Activated CD4-positive, alpha-beta memory T cell treated with anti-CD3 and anti-CD28 coated beads for 36 hours (primary cell): ENCODE measurements at regions of chr2 and their contacts with region 1.

Region 1: DNA sequence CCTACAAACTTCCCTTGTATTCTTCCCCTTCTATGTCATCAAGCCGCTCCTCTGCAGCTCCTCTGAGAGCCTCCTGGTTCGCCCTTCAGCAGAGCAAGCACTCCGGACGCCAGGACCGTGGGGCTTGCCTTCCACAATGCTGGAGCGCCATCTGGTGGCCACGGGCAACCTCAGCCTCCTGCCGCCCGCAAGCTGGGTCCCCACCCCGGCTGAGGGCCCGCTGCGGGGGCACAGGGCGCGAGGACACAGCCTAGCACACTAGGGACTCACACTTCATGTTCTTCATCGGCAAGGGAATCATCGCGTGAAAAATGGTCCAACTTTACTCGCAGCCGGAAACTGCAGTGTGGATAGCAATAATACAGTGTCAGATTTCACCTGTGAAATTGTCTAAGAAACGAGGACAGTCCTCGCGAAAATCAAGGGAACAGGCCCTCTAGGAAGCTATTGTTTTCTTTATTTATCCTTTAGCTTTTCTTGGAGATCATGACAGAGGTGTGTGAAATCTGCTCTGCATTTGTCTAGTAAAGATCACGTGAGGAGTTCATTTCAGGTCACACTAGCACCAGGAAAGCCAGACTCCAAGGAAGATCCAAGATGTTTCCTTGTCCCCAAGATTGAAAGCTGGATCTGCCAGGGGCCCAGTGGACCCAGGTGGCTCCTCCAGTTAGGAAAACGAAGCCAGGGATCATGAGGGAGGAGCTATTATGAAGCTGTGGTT is 5.8 kb downstream of the PRLH start:
- DNase-seq: peak; percentile 91
- H3K4me3 Mint-ChIP-seq: no peak overlapping the region
- H3K27ac Mint-ChIP-seq: no peak overlapping the region
- H3K4me1 Mint-ChIP-seq: no peaks in the 10 kb centered on the region
- H3K27me3 Mint-ChIP-seq: peaks cover 13% of the 10 kb centered on the region

Region 2: DNA sequence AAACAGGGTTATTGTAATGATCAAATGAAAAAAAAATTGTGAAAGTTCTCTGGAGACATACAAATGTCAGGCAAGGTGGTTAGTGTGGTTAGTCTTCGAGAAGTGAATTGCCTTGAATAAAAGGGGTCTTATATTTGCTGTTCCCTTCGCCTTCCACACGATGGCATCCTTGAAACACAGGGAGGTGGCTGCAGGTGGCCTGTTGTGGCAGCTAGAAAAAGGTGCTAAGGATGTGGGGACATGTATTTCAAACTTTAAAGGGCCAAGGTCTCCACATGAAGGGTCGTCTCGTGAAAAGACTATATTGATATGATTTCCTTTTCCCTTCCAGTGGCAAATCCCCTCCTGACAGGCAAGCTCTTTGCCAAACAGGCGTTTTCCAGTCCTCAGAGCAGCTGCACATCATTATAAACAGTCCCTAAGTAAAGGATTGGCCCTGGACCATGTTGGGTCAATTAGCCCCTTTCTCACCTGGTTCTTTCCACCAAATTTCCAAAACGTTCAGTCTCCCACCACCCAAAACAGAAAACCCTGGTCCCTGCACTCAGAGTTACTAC is 418.0 kb before region 1 on chr2:
- CTCF ChIA-PET with region 1: interaction called, 29 read pairs
- POLR2A ChIA-PET with region 1: no interaction called
- intact Hi-C with region 1: loop called (anchors 1 kb)
- DNase-seq: peak; percentile 76
- H3K4me3 Mint-ChIP-seq: no peak overlapping the region
- H3K27ac Mint-ChIP-seq: no peak overlapping the region
- H3K4me1 Mint-ChIP-seq: peaks cover 44% of the 10 kb centered on the region
- H3K27me3 Mint-ChIP-seq: peaks cover 4% of the 10 kb centered on the region

Region 3: GRCh38 chr2:237421542-237422116 is 150.6 kb before region 1 on chr2:
- CTCF ChIA-PET with region 1: interaction called, 24 read pairs
- POLR2A ChIA-PET with region 1: no interaction called
- intact Hi-C with region 1: no loop called
- DNase-seq: peak; percentile 86
- H3K4me3 Mint-ChIP-seq: peak overlapping the region; percentile 38
- H3K27ac Mint-ChIP-seq: peak overlapping the region; percentile 50
- H3K4me1 Mint-ChIP-seq: peaks cover 20% of the 10 kb centered on the region
- H3K27me3 Mint-ChIP-seq: no peaks in the 10 kb centered on the region

Region 4: GRCh38 chr2:237500681-237501424 is 71.3 kb before region 1 on chr2:
- CTCF ChIA-PET with region 1: interaction called, 12 read pairs
- POLR2A ChIA-PET with region 1: no interaction called
- intact Hi-C with region 1: no loop called
- DNase-seq: no peak
- H3K4me3 Mint-ChIP-seq: no peak overlapping the region
- H3K27ac Mint-ChIP-seq: no peak overlapping the region
- H3K4me1 Mint-ChIP-seq: no peaks in the 10 kb centered on the region
- H3K27me3 Mint-ChIP-seq: peaks cover 36% of the 10 kb centered on the region

Region 5: DNA sequence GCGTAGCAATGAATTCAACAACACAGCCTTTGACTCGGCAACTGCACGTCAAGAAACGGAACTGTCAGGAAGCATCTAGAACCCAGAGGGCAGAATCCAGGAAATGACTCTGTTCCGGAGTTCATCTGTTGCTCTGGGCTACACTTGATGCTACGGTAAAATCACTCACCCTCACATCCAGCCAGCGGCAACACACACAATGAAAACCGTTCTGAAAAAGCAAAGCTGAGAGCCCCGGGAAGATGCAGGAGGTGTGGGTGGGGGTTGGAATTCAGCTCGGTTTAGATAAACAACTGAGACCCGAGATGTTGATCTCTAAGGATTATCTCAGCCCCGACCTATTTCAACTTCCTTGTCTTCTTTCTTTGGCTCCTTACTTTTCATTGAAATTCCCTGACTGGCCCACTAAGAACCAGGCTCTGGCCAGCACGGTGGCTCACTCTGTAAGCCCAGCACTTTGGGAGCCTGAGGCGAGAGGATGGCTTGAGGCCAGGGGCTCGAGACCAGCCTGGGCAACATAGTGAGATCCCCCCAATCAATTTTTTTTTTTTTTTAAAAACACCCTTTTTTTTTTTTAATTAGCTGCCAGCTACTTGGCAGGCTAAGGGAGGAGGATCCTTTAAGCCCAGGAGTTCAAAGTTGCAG is 31.7 kb after region 1 on chr2:
- CTCF ChIA-PET with region 1: interaction called, 11 read pairs
- POLR2A ChIA-PET with region 1: no interaction called
- intact Hi-C with region 1: no loop called
- DNase-seq: peak; percentile 72
- H3K4me3 Mint-ChIP-seq: peak overlapping the region; percentile 7
- H3K27ac Mint-ChIP-seq: peak overlapping the region; percentile 42
- H3K4me1 Mint-ChIP-seq: peaks cover 18% of the 10 kb centered on the region
- H3K27me3 Mint-ChIP-seq: no peaks in the 10 kb centered on the region

Region 6: GRCh38 chr2:237616734-237617586 is 44.8 kb after region 1 on chr2:
- CTCF ChIA-PET with region 1: no interaction called
- POLR2A ChIA-PET with region 1: no interaction called
- intact Hi-C with region 1: no loop called
- DNase-seq: no peak
- H3K4me3 Mint-ChIP-seq: peak overlapping the region; percentile 36
- H3K27ac Mint-ChIP-seq: no peak overlapping the region
- H3K4me1 Mint-ChIP-seq: peaks cover 24% of the 10 kb centered on the region
- H3K27me3 Mint-ChIP-seq: no peaks in the 10 kb centered on the region

Region 7: GRCh38 chr2:237774802-237775553 is 202.8 kb after region 1 on chr2:
- CTCF ChIA-PET with region 1: interaction called, 10 read pairs
- POLR2A ChIA-PET with region 1: no interaction called
- intact Hi-C with region 1: no loop called
- DNase-seq: peak; percentile 62
- H3K4me3 Mint-ChIP-seq: no peak overlapping the region
- H3K27ac Mint-ChIP-seq: no peak overlapping the region
- H3K4me1 Mint-ChIP-seq: no peaks in the 10 kb centered on the region
- H3K27me3 Mint-ChIP-seq: no peaks in the 10 kb centered on the region